ENCODE measurements at regions of chr1 and their contacts with region 1.

Region 1: GRCh38 chr1:170967042-170967910 is 31.9 kb downstream of the MROH9 start:
- DNase-seq: peak; percentile 45
- H3K4me3 ChIP-seq: no peak overlapping the region
- H3K27ac ChIP-seq: no peak overlapping the region
- H3K4me1 ChIP-seq: no peaks in the 10 kb centered on the region
- H3K27me3 ChIP-seq: peaks cover 0 to 2% of the 10 kb centered on the region in 2 experiments
- CTCF ChIP-seq: peak in 1 of 2 donors; percentile 47
- POLR2A ChIP-seq: no peak

Region 2: GRCh38 chr1:170853302-170853701 is 114.0 kb before region 1 on chr1:
- CTCF ChIA-PET with region 1: no interaction called
- POLR2A ChIA-PET with region 1: no interaction called
- dilution Hi-C with region 1: no loop called
- intact Hi-C with region 1: no loop called
- DNase-seq: no peak
- H3K4me3 ChIP-seq: no peak overlapping the region
- H3K27ac ChIP-seq: no peak overlapping the region
- H3K4me1 ChIP-seq: no peaks in the 10 kb centered on the region
- H3K27me3 ChIP-seq: peaks cover 1 to 11% of the 10 kb centered on the region in 2 experiments
- CTCF ChIP-seq: no peak
- POLR2A ChIP-seq: no peak

Region 3: GRCh38 chr1:170978371-170978910 is 11.2 kb after region 1 on chr1:
- CTCF ChIA-PET with region 1: interaction called, 17 read pairs
- POLR2A ChIA-PET with region 1: no interaction called
- dilution Hi-C with region 1: no loop called
- intact Hi-C with region 1: no loop called
- DNase-seq: no peak
- H3K4me3 ChIP-seq: no peak overlapping the region
- H3K27ac ChIP-seq: no peak overlapping the region
- H3K4me1 ChIP-seq: no peaks in the 10 kb centered on the region
- H3K27me3 ChIP-seq: no peaks in the 10 kb centered on the region
- CTCF ChIP-seq: no peak
- POLR2A ChIP-seq: no peak

Region 4: DNA sequence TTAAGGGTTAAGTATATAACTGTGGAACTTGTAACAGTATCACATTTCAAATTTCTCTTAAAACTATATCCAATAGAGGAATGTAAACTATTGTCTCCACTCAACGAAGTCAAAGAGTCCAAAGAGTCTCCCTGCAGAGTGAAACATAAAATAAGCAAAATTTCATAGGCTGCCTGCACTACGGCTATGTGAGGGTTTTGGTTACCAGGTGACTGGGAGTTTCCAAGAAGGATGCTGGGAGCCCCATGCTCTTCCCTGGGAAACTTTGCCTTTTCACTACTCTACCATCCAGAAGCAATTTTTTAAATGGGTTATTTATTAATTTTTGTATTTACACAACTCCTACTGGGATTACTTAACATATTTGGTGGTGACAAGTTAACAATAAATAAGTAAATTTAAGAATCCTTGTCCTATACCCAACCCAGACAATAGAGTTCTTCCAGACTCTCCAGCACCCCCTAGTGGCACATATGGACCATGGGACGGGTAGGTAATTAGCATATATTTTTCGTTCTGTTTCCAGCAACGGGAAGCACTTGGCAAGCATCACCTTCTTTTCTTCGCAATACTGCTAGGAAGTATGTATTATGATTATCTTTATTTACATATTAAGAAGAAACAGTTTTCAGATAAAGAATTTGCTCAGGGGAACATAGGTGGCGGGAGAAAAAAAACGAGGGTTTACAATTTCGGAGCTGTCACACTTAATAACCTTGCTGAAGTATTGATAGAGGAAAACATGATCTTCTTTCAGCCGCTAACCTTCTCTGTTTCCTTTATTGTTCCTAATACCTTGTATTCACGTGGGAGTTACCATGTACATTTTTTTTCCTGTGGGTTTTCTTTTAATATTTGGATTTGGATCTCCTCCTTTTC is 221.4 kb after region 1 on chr1:
- CTCF ChIA-PET with region 1: interaction called, 21 read pairs
- POLR2A ChIA-PET with region 1: no interaction called
- dilution Hi-C with region 1: no loop called
- intact Hi-C with region 1: loop called (anchors 1 kb)
- DNase-seq: peak; percentile 63
- H3K4me3 ChIP-seq: no peak overlapping the region
- H3K27ac ChIP-seq: no peak overlapping the region
- H3K4me1 ChIP-seq: no peaks in the 10 kb centered on the region
- H3K27me3 ChIP-seq: no peaks in the 10 kb centered on the region
- CTCF ChIP-seq: peak; percentile 70 to 76
- POLR2A ChIP-seq: no peak

Region 5: GRCh38 chr1:171226747-171227370 is 259.6 kb after region 1 on chr1:
- CTCF ChIA-PET with region 1: interaction called, 54 read pairs
- POLR2A ChIA-PET with region 1: no interaction called
- dilution Hi-C with region 1: no loop called
- intact Hi-C with region 1: loop called (anchors 1 kb)
- DNase-seq: peak; percentile 57
- H3K4me3 ChIP-seq: no peak overlapping the region
- H3K27ac ChIP-seq: no peak overlapping the region
- H3K4me1 ChIP-seq: no peaks in the 10 kb centered on the region
- H3K27me3 ChIP-seq: no peaks in the 10 kb centered on the region
- CTCF ChIP-seq: peak; percentile 44 to 53
- POLR2A ChIP-seq: no peak

Region 6: GRCh38 chr1:171841050-171841940 is 874.0 kb after region 1 on chr1 and contains the start of gene DNM3:
- CTCF ChIA-PET with region 1: no interaction called
- POLR2A ChIA-PET with region 1: no interaction called
- dilution Hi-C with region 1: no loop called
- intact Hi-C with region 1: no loop called
- DNase-seq: peak; percentile 87
- H3K4me3 ChIP-seq: peak within 1 kb of the TSS; percentile 42 to 75 (median 73)
- H3K27ac ChIP-seq: peak within 1 kb of the TSS; percentile 55
- H3K4me1 ChIP-seq: peaks cover 15% of the 10 kb centered on the region
- H3K27me3 ChIP-seq: peaks cover 0 to 6% of the 10 kb centered on the region in 2 experiments
- CTCF ChIP-seq: no peak
- POLR2A ChIP-seq: peak; percentile 71
- total RNA-seq, gene DNM3: 2.5 and 3.6 TPM in 2 replicates

Measured in endothelial cell of umbilical vein (primary cell).